ENCODE measurements at regions of chr19 and their contacts with region 1.

Region 1: GRCh38 chr19:3304871-3305423 is 61.4 kb upstream of the NFIC start:
- DNase-seq: peak; percentile 84
- H3K4me3 Mint-ChIP-seq: no peak overlapping the region
- H3K27ac Mint-ChIP-seq: no peak overlapping the region
- H3K4me1 Mint-ChIP-seq: no peaks in the 10 kb centered on the region
- H3K27me3 Mint-ChIP-seq: peaks cover 12% of the 10 kb centered on the region

Region 2: GRCh38 chr19:3275583-3276340 is 29.2 kb before region 1 on chr19:
- CTCF ChIA-PET with region 1: interaction called, 11 read pairs
- POLR2A ChIA-PET with region 1: interaction called, 6 read pairs
- intact Hi-C with region 1: no loop called
- DNase-seq: peak; percentile 96
- H3K4me3 Mint-ChIP-seq: peak overlapping the region; percentile 80
- H3K27ac Mint-ChIP-seq: peak overlapping the region; percentile 67
- H3K4me1 Mint-ChIP-seq: peaks cover 10% of the 10 kb centered on the region
- H3K27me3 Mint-ChIP-seq: peaks cover 13% of the 10 kb centered on the region

Region 3: GRCh38 chr19:3314962-3315675 is 10.2 kb after region 1 on chr19:
- CTCF ChIA-PET with region 1: interaction called, 13 read pairs
- POLR2A ChIA-PET with region 1: no interaction called
- intact Hi-C with region 1: no loop called
- DNase-seq: no peak
- H3K4me3 Mint-ChIP-seq: no peak overlapping the region
- H3K27ac Mint-ChIP-seq: no peak overlapping the region
- H3K4me1 Mint-ChIP-seq: no peaks in the 10 kb centered on the region
- H3K27me3 Mint-ChIP-seq: peaks cover 25% of the 10 kb centered on the region

Region 4: GRCh38 chr19:3420909-3421619 is 116.1 kb after region 1 on chr19:
- CTCF ChIA-PET with region 1: interaction called, 10 read pairs
- POLR2A ChIA-PET with region 1: no interaction called
- intact Hi-C with region 1: no loop called
- DNase-seq: no peak
- H3K4me3 Mint-ChIP-seq: no peak overlapping the region
- H3K27ac Mint-ChIP-seq: no peak overlapping the region
- H3K4me1 Mint-ChIP-seq: no peaks in the 10 kb centered on the region
- H3K27me3 Mint-ChIP-seq: no peaks in the 10 kb centered on the region

Region 5: GRCh38 chr19:3429581-3430080 is 124.7 kb after region 1 on chr19:
- CTCF ChIA-PET with region 1: interaction called, 32 read pairs
- POLR2A ChIA-PET with region 1: no interaction called
- intact Hi-C with region 1: no loop called
- DNase-seq: peak; percentile 85
- H3K4me3 Mint-ChIP-seq: no peak overlapping the region
- H3K27ac Mint-ChIP-seq: no peak overlapping the region
- H3K4me1 Mint-ChIP-seq: peaks cover 7% of the 10 kb centered on the region
- H3K27me3 Mint-ChIP-seq: no peaks in the 10 kb centered on the region

Region 6: GRCh38 chr19:3471954-3472655 is 167.2 kb after region 1 on chr19:
- CTCF ChIA-PET with region 1: interaction called, 17 read pairs
- POLR2A ChIA-PET with region 1: no interaction called
- intact Hi-C with region 1: no loop called
- DNase-seq: peak; percentile 57
- H3K4me3 Mint-ChIP-seq: no peak overlapping the region
- H3K27ac Mint-ChIP-seq: no peak overlapping the region
- H3K4me1 Mint-ChIP-seq: no peaks in the 10 kb centered on the region
- H3K27me3 Mint-ChIP-seq: no peaks in the 10 kb centered on the region

Region 7: DNA sequence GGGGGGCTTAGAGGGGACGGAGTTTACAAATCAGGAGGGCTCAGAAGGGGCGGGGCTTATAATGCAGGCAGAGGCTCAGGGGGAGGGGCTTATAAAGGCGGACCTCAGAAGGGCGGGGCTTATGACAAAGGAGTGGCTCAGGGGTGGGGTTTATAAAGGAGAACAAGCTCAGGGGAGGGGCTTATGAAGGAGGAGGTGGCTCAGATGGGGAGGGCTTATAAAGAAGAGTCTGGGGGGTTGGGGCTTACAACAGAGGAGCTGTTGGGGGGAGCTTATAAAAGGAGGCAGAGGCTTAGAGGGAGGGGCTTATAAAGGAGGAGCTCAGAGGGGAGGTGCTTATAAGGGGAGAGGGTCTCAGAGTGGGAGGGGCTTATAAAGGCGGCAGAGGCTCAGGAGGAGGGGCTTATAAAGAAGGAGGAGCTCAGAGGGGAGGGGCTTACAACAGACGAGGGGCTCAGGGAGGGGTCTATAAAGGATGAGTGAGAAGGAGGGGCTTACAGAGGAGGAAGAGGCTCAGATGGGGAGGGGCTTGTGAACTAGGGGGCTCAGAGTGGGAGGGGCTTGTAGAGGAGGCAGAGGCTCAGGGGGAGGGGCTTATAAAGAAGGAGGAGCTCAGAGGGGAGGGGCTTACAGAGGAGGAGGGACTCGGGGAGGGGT is 174.4 kb after region 1 on chr19:
- CTCF ChIA-PET with region 1: interaction called, 15 read pairs
- POLR2A ChIA-PET with region 1: no interaction called
- intact Hi-C with region 1: no loop called
- DNase-seq: peak; percentile 60
- H3K4me3 Mint-ChIP-seq: no peak overlapping the region
- H3K27ac Mint-ChIP-seq: no peak overlapping the region
- H3K4me1 Mint-ChIP-seq: peaks cover 7% of the 10 kb centered on the region
- H3K27me3 Mint-ChIP-seq: peaks cover 2% of the 10 kb centered on the region

Measured in activated CD4-positive, alpha-beta memory T cell treated with anti-CD3 and anti-CD28 coated beads for 36 hours (primary cell).